HEK293T (cell line): ENCODE measurements at regions of chr19 and their contacts with region 1.

Region 1: GRCh38 chr19:44905437-44906160 is at the start of gene APOE:
- DNase-seq: no peak

Region 2: DNA sequence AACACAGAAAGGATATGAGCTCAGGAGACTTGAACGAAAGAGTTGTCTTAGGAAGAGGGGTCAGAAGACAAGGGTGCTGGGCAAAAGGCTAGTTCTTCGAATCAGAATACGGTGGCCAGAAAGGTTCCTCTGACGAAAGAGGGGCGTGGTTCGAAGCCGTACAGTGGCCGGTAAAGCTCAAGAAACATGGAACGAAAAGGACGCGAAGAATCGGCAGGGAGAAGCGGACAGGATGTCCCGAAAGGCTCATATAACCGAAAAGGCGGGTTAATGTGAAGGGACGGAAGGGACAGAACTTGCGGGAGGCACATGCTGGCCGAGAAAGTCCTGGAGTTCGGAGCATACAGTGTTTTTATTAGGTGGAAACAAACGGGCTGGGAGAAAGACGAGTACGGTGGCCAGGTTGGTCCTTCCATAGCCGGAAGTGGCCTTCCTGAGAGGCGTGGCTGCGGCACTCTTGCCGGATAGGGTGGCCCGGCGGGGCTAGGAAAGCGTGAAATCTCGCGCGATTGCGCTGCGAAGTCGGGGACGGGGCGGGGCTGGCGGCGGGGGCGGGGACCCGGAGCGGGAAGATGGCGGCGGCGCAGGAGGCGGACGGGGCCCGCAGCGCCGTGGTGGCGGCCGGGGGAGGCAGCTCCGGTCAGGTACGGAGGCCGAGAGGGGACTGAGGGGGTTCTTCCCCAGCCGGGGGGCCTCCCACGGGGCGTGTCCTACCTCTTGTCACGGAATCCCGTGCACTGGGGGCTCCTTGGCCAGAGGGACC is 49.4 kb after region 1 on chr19 and contains the start of gene CLPTM1:
- CTCF ChIA-PET with region 1: interaction called, 6 read pairs
- POLR2A ChIA-PET with region 1: interaction called, 17 read pairs
- DNase-seq: peak; percentile 98